Activated T-helper 2 cell treated with anti-CD3 and anti-CD28 coated beads, Interferon-gamma antibody, Interleukin-2, Interleukin-4, amounts not matched to agents 10 μg/mL and 5 μg/mL and 100 μg/mL, durations not matched to agents 14 hours and 24 hours and 36 hours (primary cell): ENCODE measurements at regions of chr1 and their contacts with region 1.

Region 1: GRCh38 chr1:214602764-214603657 is at the start of gene CENPF:
- DNase-seq: peak; percentile 95
- H3K4me3 Mint-ChIP-seq: peak within 1 kb of the TSS; percentile 98
- H3K27ac Mint-ChIP-seq: peak within 1 kb of the TSS; percentile 94
- H3K4me1 Mint-ChIP-seq: peaks cover 29% of the 10 kb centered on the region
- H3K27me3 Mint-ChIP-seq: no peaks in the 10 kb centered on the region
- total RNA-seq, gene CENPF: 77.1 and 85.9 TPM in 2 replicates

Region 2: GRCh38 chr1:214281021-214281719 is 321.8 kb before region 1 on chr1 and contains the start of gene SMYD2:
- intact Hi-C with region 1: loop called (anchors 1 kb)
- DNase-seq: peak; percentile 64
- H3K4me3 Mint-ChIP-seq: peak within 1 kb of the TSS; percentile 94
- H3K27ac Mint-ChIP-seq: peak within 1 kb of the TSS; percentile 75
- H3K4me1 Mint-ChIP-seq: peaks cover 32% of the 10 kb centered on the region
- H3K27me3 Mint-ChIP-seq: no peaks in the 10 kb centered on the region
- total RNA-seq, gene SMYD2: 33.6 and 34.5 TPM in 2 replicates

Region 3: DNA sequence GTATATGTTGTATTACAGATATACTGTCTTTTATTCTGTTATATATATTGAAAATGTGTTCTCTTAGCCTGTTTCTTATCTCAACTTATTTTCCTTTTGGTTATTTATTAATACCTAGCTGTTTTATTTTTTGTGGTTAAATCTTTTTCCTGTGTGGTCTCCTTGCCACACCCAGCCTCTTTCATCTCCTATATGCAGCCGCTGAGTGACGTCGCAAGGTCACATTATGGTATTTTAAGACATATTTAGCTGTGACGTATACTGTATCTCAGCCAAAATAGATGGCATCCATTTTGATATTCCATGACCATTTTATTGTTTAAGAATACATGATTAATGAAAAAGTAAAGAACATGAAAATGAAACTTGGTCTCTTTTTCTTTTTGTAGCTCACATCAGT is 29.1 kb after region 1 on chr1:
- intact Hi-C with region 1: loop called (anchors 2 kb)
- DNase-seq: no peak
- H3K4me3 Mint-ChIP-seq: no peak overlapping the region
- H3K27ac Mint-ChIP-seq: no peak overlapping the region
- H3K4me1 Mint-ChIP-seq: peaks cover 31% of the 10 kb centered on the region
- H3K27me3 Mint-ChIP-seq: no peaks in the 10 kb centered on the region

Region 4: GRCh38 chr1:214643030-214643429 is 40.0 kb after region 1 on chr1:
- intact Hi-C with region 1: no loop called
- DNase-seq: no peak
- H3K4me3 Mint-ChIP-seq: no peak overlapping the region
- H3K27ac Mint-ChIP-seq: no peak overlapping the region
- H3K4me1 Mint-ChIP-seq: peaks cover 34% of the 10 kb centered on the region
- H3K27me3 Mint-ChIP-seq: no peaks in the 10 kb centered on the region